Naive thymus-derived CD4-positive, alpha-beta T cell (primary cell): ENCODE measurements at regions of chr15 and their contacts with region 1.

Region 1: GRCh38 chr15:57165992-57166391 is 210.3 kb upstream of the CGNL1 start:
- DNase-seq: no peak
- ATAC-seq: no peak
- H3K4me3 ChIP-seq: no peak overlapping the region
- H3K4me3 Mint-ChIP-seq: no peak overlapping the region
- H3K27ac ChIP-seq: no peak overlapping the region
- H3K27ac Mint-ChIP-seq: no peak overlapping the region
- H3K4me1 ChIP-seq: no peaks in the 10 kb centered on the region
- H3K4me1 Mint-ChIP-seq: peaks cover 0 to 5% (median 0%) of the 10 kb centered on the region in 7 donors
- H3K27me3 ChIP-seq: no peaks in the 10 kb centered on the region
- H3K27me3 Mint-ChIP-seq: no peaks in the 10 kb centered on the region

Region 2: DNA sequence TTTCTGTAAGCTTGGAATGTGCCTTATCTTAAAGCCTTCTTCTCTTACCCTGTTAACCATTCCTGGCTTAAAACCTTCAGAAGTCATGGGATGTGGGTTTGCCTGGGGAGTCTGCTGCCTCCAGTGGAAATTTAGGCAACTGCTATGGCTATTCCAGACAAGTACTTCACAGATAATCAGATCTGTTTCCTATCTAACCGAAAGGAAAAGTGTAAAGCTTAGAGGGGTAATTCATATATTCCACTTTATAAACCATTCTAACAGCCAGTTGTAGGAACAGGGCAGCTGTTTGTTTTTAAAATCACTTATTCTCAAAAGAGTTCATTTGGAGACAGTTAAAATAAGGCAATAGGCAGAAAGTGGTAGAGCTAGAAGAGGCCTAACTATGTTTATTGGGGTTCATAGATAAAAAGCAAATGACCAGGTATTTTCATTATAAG is 27.6 kb before region 1 on chr15:
- CTCF ChIA-PET with region 1: no interaction called
- POLR2A ChIA-PET with region 1: no interaction called
- intact Hi-C with region 1: no loop called
- DNase-seq: peak in 1 of 9 donors; percentile 10
- ATAC-seq: no peak
- H3K4me3 ChIP-seq: no peak overlapping the region
- H3K4me3 Mint-ChIP-seq: no peak overlapping the region
- H3K27ac ChIP-seq: no peak overlapping the region
- H3K27ac Mint-ChIP-seq: no peak overlapping the region
- H3K4me1 ChIP-seq: no peaks in the 10 kb centered on the region
- H3K4me1 Mint-ChIP-seq: peaks cover 17 to 44% (median 31%) of the 10 kb centered on the region in 7 donors
- H3K27me3 ChIP-seq: no peaks in the 10 kb centered on the region
- H3K27me3 Mint-ChIP-seq: no peaks in the 10 kb centered on the region

Region 3: GRCh38 chr15:57288926-57289580 is 123.1 kb after region 1 on chr15:
- CTCF ChIA-PET with region 1: no interaction called
- POLR2A ChIA-PET with region 1: no interaction called
- intact Hi-C with region 1: loop called in 1 of 2 experiments (anchors 5 kb)
- DNase-seq: no peak
- ATAC-seq: no peak
- H3K4me3 ChIP-seq: no peak overlapping the region
- H3K4me3 Mint-ChIP-seq: no peak overlapping the region
- H3K27ac ChIP-seq: no peak overlapping the region
- H3K27ac Mint-ChIP-seq: peak overlapping the region in 1 of 9 donors; percentile 46
- H3K4me1 ChIP-seq: no peaks in the 10 kb centered on the region
- H3K4me1 Mint-ChIP-seq: peaks cover 5 to 8% (median 7%) of the 10 kb centered on the region in 7 donors
- H3K27me3 ChIP-seq: no peaks in the 10 kb centered on the region
- H3K27me3 Mint-ChIP-seq: no peaks in the 10 kb centered on the region

Region 4: DNA sequence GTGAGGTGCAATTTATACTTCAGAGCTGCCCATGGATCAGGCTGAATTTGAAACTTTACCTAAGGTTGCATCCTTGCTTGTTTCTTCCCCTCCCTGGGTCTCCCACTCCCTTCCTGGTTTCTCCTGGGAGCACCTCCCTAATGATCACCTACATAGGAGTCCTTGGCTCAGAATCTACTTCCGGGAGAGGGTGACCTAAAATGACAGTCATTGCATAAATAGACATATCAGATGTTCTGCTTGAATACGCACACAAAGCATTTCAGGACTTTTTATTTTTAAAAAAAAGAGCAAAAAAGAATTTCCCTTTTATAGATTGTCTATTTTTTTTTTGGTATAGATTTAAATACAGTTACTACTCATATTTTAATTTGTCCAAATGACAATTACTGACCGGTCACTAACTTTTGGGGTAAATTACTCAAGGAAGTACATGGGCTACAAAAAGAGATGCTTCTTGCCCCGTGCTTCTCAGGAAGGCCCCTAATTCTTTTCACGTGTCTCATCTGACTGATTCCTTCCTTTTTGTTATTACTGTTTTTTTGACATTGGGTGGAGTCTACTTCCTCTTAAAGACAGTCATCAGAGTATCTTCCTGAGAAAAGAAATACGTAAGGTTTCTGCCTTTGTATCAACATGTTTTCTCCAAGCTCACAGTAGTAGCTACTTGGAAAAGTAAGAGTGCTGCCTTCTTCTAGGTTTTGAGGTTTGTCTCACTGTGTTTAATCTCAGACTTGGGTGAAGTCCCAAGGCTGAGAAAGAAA is 420.9 kb after region 1 on chr15:
- CTCF ChIA-PET with region 1: no interaction called
- POLR2A ChIA-PET with region 1: no interaction called
- intact Hi-C with region 1: no loop called
- DNase-seq: peak in 7 of 9 donors; percentile 43 to 83 (median 66)
- ATAC-seq: peak; percentile 40
- H3K4me3 ChIP-seq: no peak overlapping the region
- H3K4me3 Mint-ChIP-seq: peak overlapping the region; percentile 7 to 81 (median 62)
- H3K27ac ChIP-seq: peak overlapping the region; percentile 68
- H3K27ac Mint-ChIP-seq: peak overlapping the region; percentile 64 to 97 (median 94)
- H3K4me1 ChIP-seq: peaks cover 0 to 41% of the 10 kb centered on the region in 2 donors
- H3K4me1 Mint-ChIP-seq: peaks cover 15 to 65% (median 50%) of the 10 kb centered on the region in 7 donors
- H3K27me3 ChIP-seq: no peaks in the 10 kb centered on the region
- H3K27me3 Mint-ChIP-seq: peaks cover 0 to 25% (median 18%) of the 10 kb centered on the region in 5 donors